ENCODE measurements at regions of chr16 and their contacts with region 1.

Region 1: DNA sequence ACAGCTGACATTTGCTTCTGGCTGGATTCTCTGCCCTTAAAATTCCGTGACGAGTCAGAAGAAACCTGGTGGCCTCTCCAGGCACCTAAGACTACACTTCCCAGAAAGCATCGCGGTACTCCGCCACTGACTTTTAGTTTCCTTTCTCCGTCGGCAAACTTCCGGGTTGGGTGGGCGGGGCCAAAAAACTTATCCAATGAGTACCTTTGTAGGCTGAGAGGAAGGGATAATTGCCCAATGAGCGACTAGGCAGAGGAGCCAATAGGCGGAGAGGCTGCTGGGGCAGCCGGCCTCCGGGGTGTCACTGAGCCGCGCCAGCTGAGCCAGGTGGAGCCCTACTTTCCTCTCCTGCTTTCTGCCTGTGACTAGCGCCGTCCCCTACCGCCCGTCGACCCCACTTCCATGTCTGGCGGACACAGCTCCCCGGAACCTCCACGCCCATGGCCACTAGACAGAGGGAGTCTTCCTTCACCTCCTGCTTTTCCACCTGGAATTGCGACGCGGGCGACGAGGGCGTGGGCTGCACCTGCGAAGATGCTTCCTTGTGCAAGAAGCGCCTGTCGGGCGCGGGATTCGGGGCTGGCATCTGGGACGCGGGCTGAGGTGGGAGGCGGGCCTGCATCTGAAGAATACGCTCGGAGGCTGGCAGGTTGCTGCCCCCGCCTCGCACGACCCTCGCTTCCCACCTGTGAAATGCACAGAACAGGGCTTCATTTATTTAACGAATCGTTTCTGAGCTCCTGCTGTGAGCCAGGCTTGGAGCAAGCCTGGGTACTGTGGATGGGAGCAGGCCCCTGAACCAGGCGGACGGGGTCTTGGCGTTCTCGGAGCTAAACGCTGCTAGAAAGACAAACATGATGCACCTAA is 16.5 kb upstream of the ARHGAP17 start:
- DNase-seq: peak; percentile 96
- ATAC-seq: peak; percentile 100
- H3K4me3 Mint-ChIP-seq: peak overlapping the region; percentile 96
- H3K27ac Mint-ChIP-seq: peak overlapping the region; percentile 90
- H3K4me1 Mint-ChIP-seq: peaks cover 28% of the 10 kb centered on the region
- H3K27me3 Mint-ChIP-seq: no peaks in the 10 kb centered on the region

Region 2: GRCh38 chr16:25014500-25015147 is 17.1 kb before region 1 on chr16:
- CTCF ChIA-PET with region 1: interaction called, 4 read pairs
- POLR2A ChIA-PET with region 1: interaction called, 20 read pairs
- DNase-seq: peak; percentile 35
- ATAC-seq: peak; percentile 48
- H3K4me3 Mint-ChIP-seq: peak overlapping the region; percentile 92
- H3K27ac Mint-ChIP-seq: peak overlapping the region; percentile 92
- H3K4me1 Mint-ChIP-seq: peaks cover 78% of the 10 kb centered on the region
- H3K27me3 Mint-ChIP-seq: no peaks in the 10 kb centered on the region

Region 3: GRCh38 chr16:25066747-25067631 is 35.3 kb after region 1 on chr16:
- CTCF ChIA-PET with region 1: no interaction called
- POLR2A ChIA-PET with region 1: interaction called, 11 read pairs
- DNase-seq: peak; percentile 90
- ATAC-seq: peak; percentile 96
- H3K4me3 Mint-ChIP-seq: peak overlapping the region; percentile 84
- H3K27ac Mint-ChIP-seq: peak overlapping the region; percentile 87
- H3K4me1 Mint-ChIP-seq: peaks cover 49% of the 10 kb centered on the region
- H3K27me3 Mint-ChIP-seq: no peaks in the 10 kb centered on the region